Breast epithelium (tissue), 4 donors: ENCODE measurements at regions of chr6 and their contacts with region 1.

Region 1: GRCh38 chr6:34834789-34835518 is 43.1 kb downstream of the BLTP3A start:
- DNase-seq: no peak
- H3K4me3 ChIP-seq: no peak overlapping the region
- H3K27ac ChIP-seq: no peak overlapping the region
- H3K4me1 ChIP-seq: no peaks in the 10 kb centered on the region
- H3K27me3 ChIP-seq: no peaks in the 10 kb centered on the region
- CTCF ChIP-seq: no peak
- POLR2A ChIP-seq: no peak

Region 2: GRCh38 chr6:34202329-34203201 is 632.4 kb before region 1 on chr6:
- intact Hi-C with region 1: no loop called
- DNase-seq: no peak
- H3K4me3 ChIP-seq: no peak overlapping the region
- H3K27ac ChIP-seq: no peak overlapping the region
- H3K4me1 ChIP-seq: no peaks in the 10 kb centered on the region
- H3K27me3 ChIP-seq: no peaks in the 10 kb centered on the region
- CTCF ChIP-seq: no peak
- POLR2A ChIP-seq: no peak

Region 3: DNA sequence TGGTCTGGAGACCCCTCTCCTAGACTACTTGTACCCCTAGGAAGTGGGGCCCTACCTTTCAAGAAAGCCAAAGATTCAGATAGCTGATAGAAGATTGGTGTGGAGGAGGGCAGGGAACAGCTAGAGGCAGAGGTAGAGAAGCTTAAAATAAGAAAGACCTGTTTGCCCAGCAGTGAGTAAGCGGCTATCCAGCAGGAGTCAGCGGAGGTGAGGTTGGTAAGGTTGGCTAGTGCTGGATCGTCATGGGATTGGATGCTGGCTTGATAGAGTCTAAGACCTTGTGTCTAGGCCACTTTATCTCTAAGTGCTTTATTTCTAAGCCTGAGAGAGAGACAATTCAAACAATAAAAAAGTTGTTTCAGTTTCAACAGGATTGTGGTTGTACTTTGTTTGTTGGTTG is 73.2 kb after region 1 on chr6:
- intact Hi-C with region 1: loop called (anchors 2 kb)
- DNase-seq: no peak
- H3K4me3 ChIP-seq: no peak overlapping the region
- H3K27ac ChIP-seq: no peak overlapping the region
- H3K4me1 ChIP-seq: no peaks in the 10 kb centered on the region
- H3K27me3 ChIP-seq: no peaks in the 10 kb centered on the region
- CTCF ChIP-seq: no peak
- POLR2A ChIP-seq: no peak